Activated T-helper 1 cell treated with anti-CD3 and anti-CD28 coated beads, Interleukin-12 subunit alpha, Interleukin-12 subunit beta, Interleukin-2, Interleukin-4 antibody, amounts not matched to agents 30 ng/mL and 10 ng/mL and 1 ng/mL, durations not matched to agents 14 hours and 24 hours and 36 hours (primary cell): ENCODE measurements at regions of chr19 and their contacts with region 1.

Region 1: DNA sequence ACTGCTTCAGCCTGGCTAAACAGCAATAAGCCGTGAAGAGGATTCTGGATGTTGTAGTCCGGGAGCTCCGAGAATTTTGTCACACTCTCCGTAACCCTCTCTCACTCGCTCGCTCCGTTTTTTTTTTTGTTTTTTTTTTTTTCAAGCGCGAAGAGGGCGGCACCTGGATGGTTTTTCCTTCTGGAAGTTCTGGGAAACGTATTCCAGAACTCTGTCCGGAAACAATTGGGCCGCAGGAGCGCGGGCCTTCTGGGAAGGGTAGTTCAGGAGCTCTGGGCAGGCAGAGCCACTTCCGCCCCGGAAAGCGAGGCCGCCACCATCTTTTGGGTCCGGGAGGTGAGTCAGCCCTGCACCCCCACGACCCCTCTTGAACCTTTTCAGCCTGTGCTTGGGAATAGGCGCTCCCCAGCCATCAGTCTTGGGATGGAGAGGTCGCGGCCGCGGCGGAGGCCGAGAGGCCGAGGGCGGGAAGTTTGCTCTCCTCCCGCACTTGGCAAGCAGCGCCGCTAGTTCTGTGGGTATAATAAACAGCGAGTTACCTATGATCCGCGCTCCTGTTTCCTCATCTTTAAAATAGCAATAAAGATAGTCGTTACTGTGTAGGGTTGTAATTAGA is at the start of gene ZNF227:
- DNase-seq: peak; percentile 70
- H3K4me3 Mint-ChIP-seq: peak within 1 kb of the TSS; percentile 89
- H3K27ac Mint-ChIP-seq: peak within 1 kb of the TSS; percentile 79
- H3K4me1 Mint-ChIP-seq: peaks cover 27% of the 10 kb centered on the region
- H3K27me3 Mint-ChIP-seq: no peaks in the 10 kb centered on the region
- total RNA-seq, gene ZNF227: 21.7 and 22.6 TPM in 2 replicates

Region 2: DNA sequence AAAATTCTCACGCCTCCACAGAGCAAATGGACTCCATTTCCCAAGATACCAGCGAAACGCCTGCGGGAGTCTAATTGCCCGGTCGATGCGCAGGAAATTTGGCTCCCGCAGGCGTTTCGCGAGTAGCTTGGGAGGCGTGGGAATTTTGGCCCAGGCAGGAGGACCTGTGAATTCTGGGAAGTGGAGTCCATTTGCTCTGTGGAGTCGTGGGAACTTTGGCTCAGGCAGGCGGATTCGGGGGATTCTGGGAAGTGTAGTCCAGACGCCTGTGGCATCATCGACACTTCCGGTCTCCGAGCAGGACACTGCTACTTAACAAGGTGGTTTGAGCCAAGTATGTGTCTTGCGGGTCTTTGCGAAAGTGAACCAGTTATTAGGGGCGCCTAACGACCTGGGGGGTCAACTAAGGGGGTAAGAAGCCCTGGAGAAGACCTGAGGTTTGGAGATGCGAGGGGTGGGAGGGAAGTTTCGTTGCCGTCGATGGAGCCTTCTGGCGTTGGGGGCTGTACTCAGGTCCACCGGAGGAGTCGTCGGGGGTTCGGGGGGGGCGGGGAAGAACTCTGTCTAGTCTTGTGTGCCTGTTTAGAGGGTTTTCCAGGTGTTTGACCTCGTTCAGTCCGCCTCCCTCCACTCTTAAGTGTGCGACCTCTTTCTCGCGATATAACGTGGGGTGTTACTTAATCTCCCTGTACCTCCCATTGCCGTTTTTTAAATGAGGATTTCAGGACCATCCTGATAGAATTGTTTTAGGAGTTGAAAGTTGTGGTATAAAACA is 228.3 kb before region 1 on chr19 and contains the start of gene ZNF155:
- intact Hi-C with region 1: loop called (anchors 2 kb)
- DNase-seq: peak; percentile 56
- H3K4me3 Mint-ChIP-seq: peak within 1 kb of the TSS; percentile 94
- H3K27ac Mint-ChIP-seq: peak within 1 kb of the TSS; percentile 88
- H3K4me1 Mint-ChIP-seq: peaks cover 8% of the 10 kb centered on the region
- H3K27me3 Mint-ChIP-seq: no peaks in the 10 kb centered on the region
- total RNA-seq, gene ZNF155: 5.2 and 6.5 TPM in 2 replicates

Region 3: DNA sequence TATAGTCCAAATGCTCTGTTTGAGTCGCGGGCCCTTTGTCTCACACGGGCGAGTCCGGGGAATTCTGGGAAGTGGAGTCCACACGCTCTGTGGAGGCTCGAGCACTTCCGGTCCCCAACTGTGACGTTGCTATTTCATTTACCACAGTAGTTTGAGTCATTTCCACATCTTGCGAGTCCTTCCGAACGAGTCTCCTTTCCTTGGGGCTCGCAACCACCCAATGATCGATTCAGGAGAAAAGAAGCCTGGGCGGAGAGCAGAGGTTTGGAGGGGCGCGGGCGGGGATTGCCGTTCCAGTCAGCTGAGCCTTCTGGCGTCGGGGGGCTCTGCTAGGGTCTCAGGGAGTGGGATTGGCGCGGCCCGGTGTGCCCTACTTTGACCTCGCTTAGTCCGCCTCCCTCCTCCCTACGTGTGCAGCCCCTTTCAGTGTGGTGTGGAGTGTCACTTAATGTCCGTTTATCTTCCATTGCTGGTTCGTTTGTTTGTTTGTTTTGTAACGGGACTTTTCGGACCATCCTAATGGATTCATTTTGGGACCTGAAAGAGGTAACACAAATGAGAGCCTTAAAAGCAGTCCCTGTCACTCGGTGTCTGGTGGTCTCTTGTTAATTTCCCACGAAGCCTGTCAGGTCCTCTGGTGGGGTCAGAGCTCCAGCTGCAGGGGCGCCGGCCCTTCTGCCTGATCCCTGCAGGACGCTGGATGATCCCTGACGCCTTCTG is 187.0 kb before region 1 on chr19 and contains the start of gene ZNF222:
- intact Hi-C with region 1: loop called (anchors 2 kb)
- DNase-seq: peak; percentile 69
- H3K4me3 Mint-ChIP-seq: peak within 1 kb of the TSS; percentile 96
- H3K27ac Mint-ChIP-seq: peak within 1 kb of the TSS; percentile 85
- H3K4me1 Mint-ChIP-seq: peaks cover 18% of the 10 kb centered on the region
- H3K27me3 Mint-ChIP-seq: no peaks in the 10 kb centered on the region
- total RNA-seq, gene ZNF222: 1.2 and 1.5 TPM in 2 replicates

Region 4: GRCh38 chr19:44113138-44113783 is 99.1 kb before region 1 on chr19 and contains the start of gene ZNF225:
- intact Hi-C with region 1: loop called (anchors 2 kb)
- DNase-seq: peak; percentile 81
- H3K4me3 Mint-ChIP-seq: peak within 1 kb of the TSS; percentile 100
- H3K27ac Mint-ChIP-seq: peak within 1 kb of the TSS; percentile 88
- H3K4me1 Mint-ChIP-seq: peaks cover 30% of the 10 kb centered on the region
- H3K27me3 Mint-ChIP-seq: no peaks in the 10 kb centered on the region
- total RNA-seq, gene ZNF225: 3.8 and 5.0 TPM in 2 replicates

Region 5: DNA sequence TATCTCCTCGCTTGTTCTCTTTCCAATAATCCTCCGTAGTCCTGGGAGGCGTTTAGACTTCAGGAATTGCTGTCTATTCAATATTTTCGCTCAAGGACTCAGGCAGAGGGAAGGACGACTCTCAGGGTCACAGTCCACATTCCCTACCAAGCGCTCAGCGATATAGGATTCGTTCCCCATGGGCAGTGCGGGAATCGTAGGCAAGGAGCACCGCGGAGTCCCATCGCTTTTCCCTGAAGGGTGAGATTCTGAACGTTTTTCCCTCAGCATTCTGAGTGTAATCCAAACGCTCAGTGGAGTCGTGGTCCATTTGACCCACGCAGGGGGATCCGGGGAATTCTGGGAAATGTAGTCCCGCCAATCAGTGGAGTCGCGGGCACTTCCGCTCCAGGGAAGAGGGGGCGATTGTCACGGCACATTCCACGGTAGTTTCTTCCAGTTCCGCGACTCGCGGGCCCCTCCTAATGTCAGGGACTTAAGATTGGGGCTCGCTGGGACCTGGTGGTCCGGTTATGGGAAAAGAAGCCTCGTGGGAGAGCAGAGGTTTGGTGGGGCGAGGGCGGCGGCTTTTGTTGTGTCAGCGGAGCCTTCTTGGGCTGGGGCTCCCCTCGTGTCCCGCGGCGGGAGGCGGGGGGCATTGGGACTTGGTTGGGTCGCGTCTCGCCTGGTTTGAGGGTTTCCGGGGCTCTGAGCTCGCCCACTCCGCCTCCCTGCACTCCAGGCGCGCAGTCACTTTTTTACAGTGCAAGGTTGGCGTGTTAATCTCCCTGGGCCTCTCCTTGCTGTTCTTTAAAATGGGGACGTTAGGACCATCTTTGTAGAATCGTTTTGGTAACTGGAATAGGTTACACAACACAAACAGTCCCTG is 70.9 kb before region 1 on chr19 and contains the start of gene ZNF234:
- intact Hi-C with region 1: loop called (anchors 1 kb)
- DNase-seq: peak; percentile 52
- H3K4me3 Mint-ChIP-seq: peak within 1 kb of the TSS; percentile 93
- H3K27ac Mint-ChIP-seq: peak within 1 kb of the TSS; percentile 76
- H3K4me1 Mint-ChIP-seq: peaks cover 14% of the 10 kb centered on the region
- H3K27me3 Mint-ChIP-seq: no peaks in the 10 kb centered on the region
- total RNA-seq, gene ZNF234: 8.4 and 10.3 TPM in 2 replicates

Region 6: DNA sequence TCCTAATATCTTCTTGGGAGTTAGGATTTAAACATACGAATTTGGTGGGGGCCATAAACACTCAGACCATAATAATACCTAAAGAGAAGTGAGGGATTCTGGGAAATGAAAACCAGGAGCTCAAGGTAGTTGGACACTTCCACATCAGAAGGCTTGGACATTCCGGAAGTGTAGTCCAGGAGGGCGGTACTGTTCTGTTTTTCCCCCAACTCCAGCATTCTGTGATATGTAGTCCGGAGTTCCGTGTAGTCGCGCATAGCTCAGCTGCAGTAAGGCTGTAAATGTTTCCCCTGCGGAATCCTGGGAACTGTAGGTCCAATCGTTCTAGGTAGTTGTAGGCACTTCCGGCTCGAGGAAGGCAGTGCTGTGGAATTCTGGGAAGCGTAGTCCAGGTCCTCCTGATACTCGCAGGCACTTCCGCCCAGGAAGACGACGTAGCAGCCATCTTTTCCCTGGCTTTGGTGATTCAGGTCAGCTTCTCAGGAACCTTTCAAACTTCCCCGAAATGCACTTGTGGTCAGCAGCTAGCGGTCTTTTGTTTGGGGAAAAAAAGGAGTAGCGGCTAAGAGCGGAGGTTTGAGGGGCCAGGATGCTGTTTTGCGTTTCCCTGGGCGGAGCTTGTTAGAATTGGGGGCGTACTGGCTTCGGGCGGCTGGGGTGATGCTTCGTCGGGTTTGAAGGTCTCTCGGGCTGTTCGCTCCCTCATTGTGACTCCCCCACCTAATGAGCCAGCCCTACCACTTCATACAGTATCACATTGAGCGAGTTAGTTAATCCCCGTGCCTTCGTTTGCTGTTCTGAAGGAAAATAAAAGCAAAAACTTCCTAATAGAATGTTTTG is 47.5 kb before region 1 on chr19 and contains the start of gene ZNF226:
- intact Hi-C with region 1: loop called (anchors 1 kb)
- DNase-seq: peak; percentile 71
- H3K4me3 Mint-ChIP-seq: peak within 1 kb of the TSS; percentile 90
- H3K27ac Mint-ChIP-seq: peak within 1 kb of the TSS; percentile 84
- H3K4me1 Mint-ChIP-seq: peaks cover 29% of the 10 kb centered on the region
- H3K27me3 Mint-ChIP-seq: no peaks in the 10 kb centered on the region
- total RNA-seq, gene ZNF226: 10.5 and 11.6 TPM in 2 replicates

Region 7: DNA sequence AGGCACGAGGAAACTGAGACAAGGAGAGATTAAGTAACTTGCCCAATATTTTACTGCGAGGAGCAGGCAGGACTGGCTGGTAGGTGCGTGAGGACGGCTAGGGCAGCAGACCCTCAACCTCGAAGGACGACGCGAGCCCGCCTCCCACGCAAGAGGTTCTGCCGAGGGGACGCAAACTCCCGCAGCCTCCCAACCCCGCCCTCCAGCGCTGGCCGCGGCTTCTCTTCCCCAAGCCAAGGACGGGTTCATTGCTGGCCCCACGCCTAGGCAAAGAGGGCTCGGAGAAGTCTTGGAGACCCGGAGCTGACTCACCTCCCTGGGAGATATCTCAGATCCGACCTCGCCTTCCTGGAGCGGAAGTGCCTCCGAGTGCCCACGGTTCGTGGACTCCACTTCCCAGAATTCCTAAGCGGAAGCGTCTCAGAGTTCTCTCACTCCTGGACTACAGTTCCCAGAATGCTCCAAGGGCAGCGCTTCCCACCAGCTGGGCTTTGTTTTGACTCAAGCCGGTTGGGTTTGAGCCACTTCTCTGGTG is 92.4 kb after region 1 on chr19 and contains the start of gene ZNF235:
- intact Hi-C with region 1: loop called (anchors 2 kb)
- DNase-seq: peak; percentile 60
- H3K4me3 Mint-ChIP-seq: peak within 1 kb of the TSS; percentile 90
- H3K27ac Mint-ChIP-seq: peak within 1 kb of the TSS; percentile 34
- H3K4me1 Mint-ChIP-seq: peaks cover 20% of the 10 kb centered on the region
- H3K27me3 Mint-ChIP-seq: no peaks in the 10 kb centered on the region
- total RNA-seq, gene ZNF235: 3.8 and 4.7 TPM in 2 replicates